PC-3 (cell line): ENCODE measurements at regions of chr13 and their contacts with region 1.

Region 1: GRCh38 chr13:33817901-33818706 is at the start of gene RFC3:
- DNase-seq: peak; percentile 95
- ATAC-seq: peak; percentile 97
- H3K4me3 ChIP-seq: peak within 1 kb of the TSS; percentile 98
- H3K27ac ChIP-seq: peak within 1 kb of the TSS; percentile 70
- H3K4me1 ChIP-seq: peaks cover 13% of the 10 kb centered on the region
- H3K27me3 ChIP-seq: no peaks in the 10 kb centered on the region
- CTCF ChIP-seq: no peak
- total RNA-seq, gene RFC3: 30.3 and 32.2 TPM in 2 replicates

Region 2: GRCh38 chr13:33918199-33918932 is 100.3 kb after region 1 on chr13:
- CTCF ChIA-PET with region 1: no interaction called
- POLR2A ChIA-PET with region 1: no interaction called
- intact Hi-C with region 1: loop called (anchors 10 kb)
- DNase-seq: peak; percentile 85
- ATAC-seq: peak; percentile 97
- H3K4me3 ChIP-seq: no peak overlapping the region
- H3K27ac ChIP-seq: peak overlapping the region; percentile 13
- H3K4me1 ChIP-seq: peaks cover 15% of the 10 kb centered on the region
- H3K27me3 ChIP-seq: no peaks in the 10 kb centered on the region
- CTCF ChIP-seq: no peak

Region 3: DNA sequence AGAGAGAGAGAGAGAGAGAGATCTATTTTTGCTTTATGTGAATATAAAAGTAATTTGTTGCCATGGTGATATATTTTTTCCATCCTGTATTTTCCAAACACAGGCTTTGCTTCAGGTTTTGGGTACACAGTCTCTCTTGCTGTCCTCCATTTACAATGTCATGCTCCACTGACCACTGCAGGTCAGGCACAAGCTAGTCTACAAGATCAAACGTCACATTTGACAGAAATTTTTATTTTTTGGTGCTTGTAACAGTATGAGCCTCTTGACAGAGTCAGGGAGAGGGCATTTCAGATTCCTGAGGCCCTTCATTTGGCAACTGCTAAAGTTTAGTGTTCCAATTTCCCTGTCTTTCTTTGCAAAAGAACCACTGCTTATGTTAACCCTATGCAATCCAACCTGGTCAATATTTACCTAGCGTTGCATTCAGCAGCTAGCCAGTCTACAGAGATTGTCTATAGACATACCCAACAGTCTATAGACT is 174.8 kb after region 1 on chr13:
- CTCF ChIA-PET with region 1: no interaction called
- POLR2A ChIA-PET with region 1: no interaction called
- intact Hi-C with region 1: no loop called
- DNase-seq: no peak
- ATAC-seq: no peak
- H3K4me3 ChIP-seq: no peak overlapping the region
- H3K27ac ChIP-seq: no peak overlapping the region
- H3K4me1 ChIP-seq: peaks cover 9% of the 10 kb centered on the region
- H3K27me3 ChIP-seq: no peaks in the 10 kb centered on the region
- CTCF ChIP-seq: no peak